ENCODE measurements at regions of chr3 and their contacts with region 1.

Region 1: GRCh38 chr3:138118612-138119422 is 3.4 kb upstream of the DZIP1L start:
- DNase-seq: peak; percentile 69
- CTCF ChIP-seq: peak; percentile 86

Region 2: GRCh38 chr3:138068579-138069174 is 50.1 kb before region 1 on chr3:
- CTCF ChIA-PET with region 1: interaction called, 68 read pairs
- POLR2A ChIA-PET with region 1: no interaction called
- DNase-seq: peak; percentile 84
- CTCF ChIP-seq: peak; percentile 100

Region 3: GRCh38 chr3:138097169-138097800 is 21.5 kb before region 1 on chr3:
- CTCF ChIA-PET with region 1: interaction called, 16 read pairs
- POLR2A ChIA-PET with region 1: no interaction called
- DNase-seq: no peak
- CTCF ChIP-seq: no peak

Region 4: GRCh38 chr3:138108099-138108498 is 10.7 kb before region 1 on chr3:
- CTCF ChIA-PET with region 1: interaction called, 19 read pairs
- POLR2A ChIA-PET with region 1: no interaction called
- DNase-seq: no peak
- CTCF ChIP-seq: no peak

Region 5: GRCh38 chr3:138347960-138348753 is 229.3 kb after region 1 on chr3 and contains the start of gene MRAS:
- CTCF ChIA-PET with region 1: no interaction called
- POLR2A ChIA-PET with region 1: no interaction called
- DNase-seq: no peak
- CTCF ChIP-seq: peak; percentile 11